Dendritic cell treated with granulocyte-macrophage colony-stimulating factor and Interleukin-4, amounts not matched to agents 40 ng/mL and 50 ng/mL, for 4 days (primary cell): ENCODE measurements at regions of chr3 and their contacts with region 1.

Region 1: GRCh38 chr3:111691293-111691909 is 96.3 kb upstream of the ZBED2 start:
- H3K4me3 Mint-ChIP-seq: no peak overlapping the region
- H3K27ac Mint-ChIP-seq: no peak overlapping the region
- H3K4me1 Mint-ChIP-seq: no peaks in the 10 kb centered on the region
- H3K27me3 Mint-ChIP-seq: no peaks in the 10 kb centered on the region

Region 2: GRCh38 chr3:111577794-111578685 is 113.4 kb before region 1 on chr3:
- intact Hi-C with region 1: loop called (anchors 5 kb)
- H3K4me3 Mint-ChIP-seq: no peak overlapping the region
- H3K27ac Mint-ChIP-seq: no peak overlapping the region
- H3K4me1 Mint-ChIP-seq: peaks cover 7% of the 10 kb centered on the region
- H3K27me3 Mint-ChIP-seq: no peaks in the 10 kb centered on the region

Region 3: GRCh38 chr3:111668912-111669488 is 22.4 kb before region 1 on chr3:
- intact Hi-C with region 1: loop called (anchors 1 kb)
- H3K4me3 Mint-ChIP-seq: no peak overlapping the region
- H3K27ac Mint-ChIP-seq: no peak overlapping the region
- H3K4me1 Mint-ChIP-seq: peaks cover 20% of the 10 kb centered on the region
- H3K27me3 Mint-ChIP-seq: peaks cover 14% of the 10 kb centered on the region